GM10248 (cell line): ENCODE measurements at regions of chr19 and their contacts with region 1.

Region 1: GRCh38 chr19:12736995-12737834 is at the start of gene GET3:
- DNase-seq: peak; percentile 91
- CTCF ChIP-seq: no peak

Region 2: DNA sequence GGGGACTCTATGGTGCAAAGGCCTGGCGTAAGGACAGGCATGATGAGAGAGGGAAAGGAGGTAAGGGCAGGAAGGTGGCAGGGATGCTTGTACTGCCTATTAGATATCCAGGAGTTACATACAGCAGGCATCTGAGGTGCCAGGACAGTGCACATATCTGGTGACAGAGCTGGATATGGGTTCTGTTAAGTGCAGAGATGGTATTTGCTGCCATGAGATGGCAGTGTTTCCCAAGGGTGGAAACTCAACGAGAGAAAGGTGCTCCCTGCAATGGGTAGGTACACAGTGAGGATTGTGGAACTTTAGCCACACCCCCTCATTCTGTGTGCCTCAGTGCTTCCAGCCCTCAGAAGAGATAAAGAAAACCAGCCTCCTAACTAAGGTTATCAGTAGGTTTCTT is 20.4 kb before region 1 on chr19:
- CTCF ChIA-PET with region 1: interaction called, 14 read pairs
- POLR2A ChIA-PET with region 1: no interaction called
- DNase-seq: no peak
- CTCF ChIP-seq: peak; percentile 38

Region 3: DNA sequence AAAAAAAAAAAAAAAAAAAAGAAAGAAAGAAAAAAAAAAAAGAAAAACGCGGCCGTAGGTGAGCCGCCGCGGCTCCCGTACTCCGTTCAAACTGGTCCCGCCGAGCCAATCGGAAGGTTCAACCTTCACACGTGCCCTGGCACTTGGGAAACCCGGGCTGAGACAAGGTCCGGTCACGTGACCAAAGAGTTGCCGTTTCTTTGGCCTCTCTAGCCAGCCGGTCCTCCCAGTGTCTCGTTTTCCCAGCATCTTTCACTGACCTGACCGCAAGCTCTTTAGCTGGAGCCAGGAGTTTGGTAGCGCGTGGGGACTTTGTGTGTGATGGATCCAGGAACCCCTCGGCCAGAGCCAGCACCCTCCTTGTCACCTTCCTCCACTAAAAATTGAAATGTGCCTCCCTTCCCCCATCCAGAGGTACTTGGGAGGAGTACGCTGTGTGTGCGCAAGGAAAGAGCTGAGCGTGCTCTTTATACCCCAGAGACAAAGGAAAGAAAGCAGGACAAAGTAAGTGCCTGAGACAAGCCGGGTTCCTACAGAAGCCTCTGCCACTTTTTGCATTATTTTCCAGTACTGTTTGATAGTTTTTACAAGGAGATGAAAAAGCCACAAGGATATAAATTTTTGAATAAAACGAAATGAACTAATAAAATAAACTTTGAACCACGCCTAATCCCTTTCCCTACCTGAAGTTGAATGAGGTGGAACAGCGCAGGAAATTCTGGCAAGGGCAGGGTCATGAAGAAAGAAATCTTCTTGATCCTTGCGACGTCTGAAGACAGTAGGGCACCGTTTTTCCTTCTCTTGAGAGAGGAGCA is 14.4 kb before region 1 on chr19:
- CTCF ChIA-PET with region 1: interaction called, 14 read pairs
- POLR2A ChIA-PET with region 1: interaction called, 6 read pairs
- DNase-seq: peak; percentile 97
- CTCF ChIP-seq: no peak

Region 4: DNA sequence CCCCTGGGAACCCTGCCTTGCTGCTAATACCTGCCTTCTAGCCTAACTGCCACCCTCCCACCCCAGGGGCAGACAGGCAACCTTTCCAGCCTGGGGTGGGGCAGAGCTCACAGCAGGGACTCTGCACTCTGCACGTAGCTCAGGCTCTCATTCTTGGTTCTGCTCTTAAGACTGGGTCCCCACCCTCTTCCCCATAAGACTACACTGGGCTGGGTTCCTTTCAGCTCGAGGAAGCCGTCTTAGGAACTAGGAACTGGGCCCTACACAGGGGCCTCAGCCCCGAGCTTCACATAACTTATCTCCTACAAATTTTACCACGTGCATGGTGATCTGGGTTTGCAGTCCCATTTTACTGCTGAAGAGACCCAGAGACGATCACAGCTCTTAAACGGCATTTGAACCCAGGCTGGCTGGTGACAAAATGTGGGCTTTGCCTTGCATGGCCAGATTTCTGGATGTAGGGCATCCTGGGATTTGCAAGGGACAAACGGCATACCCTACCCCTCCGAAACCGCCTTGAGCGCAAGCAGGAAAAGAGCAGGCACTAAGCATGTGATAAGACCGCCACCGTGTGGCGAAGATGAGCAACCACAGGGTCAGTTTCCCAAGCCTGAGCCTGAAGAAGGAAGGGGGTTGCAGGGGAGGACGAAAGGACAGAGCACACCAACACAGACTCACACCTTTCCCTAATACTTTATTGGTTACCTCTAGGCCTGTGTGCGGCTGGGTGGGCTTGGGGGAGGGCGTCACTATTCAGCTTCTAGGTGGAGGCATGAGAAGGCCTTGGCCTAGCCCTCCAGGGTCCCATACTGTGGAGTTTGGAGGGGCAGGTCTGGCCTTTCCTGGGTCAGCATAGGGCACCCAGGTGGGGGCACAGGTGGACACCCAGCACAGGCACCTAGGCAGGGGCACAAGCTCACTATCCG is 59.2 kb after region 1 on chr19:
- CTCF ChIA-PET with region 1: interaction called, 24 read pairs
- POLR2A ChIA-PET with region 1: interaction called, 7 read pairs
- DNase-seq: peak; percentile 67
- CTCF ChIP-seq: peak; percentile 96